ENCODE measurements at regions of chr6 and their contacts with region 1.

Region 1: GRCh38 chr6:139364302-139364981 is 10.0 kb downstream of the CITED2 start:
- DNase-seq: no peak
- H3K4me3 Mint-ChIP-seq: no peak overlapping the region
- H3K27ac Mint-ChIP-seq: no peak overlapping the region
- H3K4me1 Mint-ChIP-seq: peaks cover 27% of the 10 kb centered on the region
- H3K27me3 Mint-ChIP-seq: no peaks in the 10 kb centered on the region

Region 2: GRCh38 chr6:139109558-139109957 is 254.9 kb before region 1 on chr6:
- CTCF ChIA-PET with region 1: interaction called, 11 read pairs
- POLR2A ChIA-PET with region 1: no interaction called
- intact Hi-C with region 1: no loop called
- DNase-seq: peak; percentile 72
- H3K4me3 Mint-ChIP-seq: no peak overlapping the region
- H3K27ac Mint-ChIP-seq: no peak overlapping the region
- H3K4me1 Mint-ChIP-seq: peaks cover 47% of the 10 kb centered on the region
- H3K27me3 Mint-ChIP-seq: no peaks in the 10 kb centered on the region

Region 3: GRCh38 chr6:139230391-139230840 is 134.0 kb before region 1 on chr6:
- CTCF ChIA-PET with region 1: interaction called, 18 read pairs
- POLR2A ChIA-PET with region 1: no interaction called
- intact Hi-C with region 1: loop called (anchors 5 kb)
- DNase-seq: no peak
- H3K4me3 Mint-ChIP-seq: no peak overlapping the region
- H3K27ac Mint-ChIP-seq: no peak overlapping the region
- H3K4me1 Mint-ChIP-seq: peaks cover 12% of the 10 kb centered on the region
- H3K27me3 Mint-ChIP-seq: no peaks in the 10 kb centered on the region

Measured in activated CD4-positive, alpha-beta memory T cell treated with anti-CD3 and anti-CD28 coated beads for 36 hours (primary cell).